Naive thymus-derived CD4-positive, alpha-beta T cell (primary cell): ENCODE measurements at regions of chr15 and their contacts with region 1.

Region 1: GRCh38 chr15:63504247-63504978 is at the start of gene USP3:
- DNase-seq: peak; percentile 88 to 95 (median 94)
- ATAC-seq: peak; percentile 86
- H3K4me3 ChIP-seq: peak within 1 kb of the TSS; percentile 95
- H3K4me3 Mint-ChIP-seq: peak within 1 kb of the TSS; percentile 93 to 99 (median 98)
- H3K27ac ChIP-seq: peak within 1 kb of the TSS; percentile 97
- H3K27ac Mint-ChIP-seq: peak within 1 kb of the TSS; percentile 94 to 99 (median 97)
- H3K4me1 ChIP-seq: peaks cover 65 to 70% of the 10 kb centered on the region in 2 donors
- H3K4me1 Mint-ChIP-seq: peaks cover 30 to 75% (median 72%) of the 10 kb centered on the region in 7 donors
- H3K27me3 ChIP-seq: no peaks in the 10 kb centered on the region
- H3K27me3 Mint-ChIP-seq: no peaks in the 10 kb centered on the region
- total RNA-seq, gene USP3: 64.2 to 288 (median 155) TPM

Region 2: GRCh38 chr15:63048115-63048775 is 456.2 kb before region 1 on chr15:
- CTCF ChIA-PET with region 1: no interaction called
- POLR2A ChIA-PET with region 1: no interaction called
- intact Hi-C with region 1: loop called in 1 of 2 experiments (anchors 5 kb)
- DNase-seq: peak; percentile 72 to 90 (median 85)
- ATAC-seq: peak; percentile 92
- H3K4me3 ChIP-seq: peak overlapping the region; percentile 76
- H3K4me3 Mint-ChIP-seq: peak overlapping the region; percentile 84 to 97 (median 94)
- H3K27ac ChIP-seq: peak overlapping the region; percentile 59
- H3K27ac Mint-ChIP-seq: peak overlapping the region; percentile 25 to 85 (median 68)
- H3K4me1 ChIP-seq: peaks cover 7 to 16% of the 10 kb centered on the region in 2 donors
- H3K4me1 Mint-ChIP-seq: peaks cover 13 to 42% (median 26%) of the 10 kb centered on the region in 7 donors
- H3K27me3 ChIP-seq: peaks cover 17 to 27% of the 10 kb centered on the region in 2 donors
- H3K27me3 Mint-ChIP-seq: peaks cover 30 to 60% (median 36%) of the 10 kb centered on the region in 5 donors

Region 3: DNA sequence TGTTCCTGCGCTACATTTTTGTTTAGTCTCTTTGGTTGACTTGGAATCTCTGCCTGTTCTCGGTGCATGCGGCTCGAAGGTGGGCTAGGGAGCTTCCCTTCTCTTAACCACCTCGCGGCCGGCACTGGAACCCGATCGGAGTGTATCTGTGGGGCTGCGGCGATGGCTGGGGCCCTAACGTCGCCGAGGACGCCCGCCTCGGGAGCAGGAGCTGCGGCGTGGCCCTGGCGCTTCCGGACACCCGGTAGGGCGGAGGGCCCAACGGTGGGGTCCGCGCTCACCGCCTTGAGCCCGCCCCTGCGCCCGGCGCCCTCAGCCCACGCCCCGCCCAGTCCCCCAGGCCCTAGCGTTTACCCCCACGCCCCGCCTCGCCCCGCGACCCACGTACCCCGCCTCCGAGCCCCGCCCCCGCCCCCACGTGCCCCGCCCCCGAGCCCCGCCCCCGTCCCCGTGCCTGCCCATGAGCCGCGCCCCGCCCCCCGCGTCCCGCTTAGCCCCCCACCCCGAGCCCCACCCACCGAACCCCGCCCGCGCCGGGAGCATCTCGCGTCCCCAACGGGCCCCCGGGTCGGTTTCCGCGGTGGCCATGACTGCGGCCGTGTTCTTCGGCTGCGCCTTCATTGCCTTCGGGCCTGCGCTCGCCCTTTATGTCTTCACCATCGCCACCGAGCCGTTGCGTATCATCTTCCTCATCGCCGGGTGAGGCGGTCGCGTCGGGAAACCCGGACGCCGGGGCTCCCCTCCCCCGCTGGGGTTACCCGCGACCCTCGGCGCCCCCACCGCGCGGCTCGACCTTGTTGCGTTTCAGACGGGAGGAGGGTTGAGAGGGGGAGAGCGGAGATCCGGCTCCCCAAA is 227.1 kb before region 1 on chr15 and contains the start of gene APH1B:
- CTCF ChIA-PET with region 1: no interaction called
- POLR2A ChIA-PET with region 1: no interaction called
- intact Hi-C with region 1: loop called in 1 of 2 experiments (anchors 2 kb)
- DNase-seq: peak; percentile 62 to 80 (median 74)
- ATAC-seq: peak; percentile 92
- H3K4me3 ChIP-seq: peak within 1 kb of the TSS; percentile 71
- H3K4me3 Mint-ChIP-seq: peak within 1 kb of the TSS; percentile 78 to 93 (median 89)
- H3K27ac ChIP-seq: peak within 1 kb of the TSS; percentile 96
- H3K27ac Mint-ChIP-seq: peak within 1 kb of the TSS; percentile 75 to 98 (median 86)
- H3K4me1 ChIP-seq: peaks cover 10 to 21% of the 10 kb centered on the region in 2 donors
- H3K4me1 Mint-ChIP-seq: peaks cover 23 to 49% (median 46%) of the 10 kb centered on the region in 7 donors
- H3K27me3 ChIP-seq: no peaks in the 10 kb centered on the region
- H3K27me3 Mint-ChIP-seq: no peaks in the 10 kb centered on the region
- total RNA-seq, gene APH1B: 9.9 to 29.9 (median 17.6) TPM

Region 4: DNA sequence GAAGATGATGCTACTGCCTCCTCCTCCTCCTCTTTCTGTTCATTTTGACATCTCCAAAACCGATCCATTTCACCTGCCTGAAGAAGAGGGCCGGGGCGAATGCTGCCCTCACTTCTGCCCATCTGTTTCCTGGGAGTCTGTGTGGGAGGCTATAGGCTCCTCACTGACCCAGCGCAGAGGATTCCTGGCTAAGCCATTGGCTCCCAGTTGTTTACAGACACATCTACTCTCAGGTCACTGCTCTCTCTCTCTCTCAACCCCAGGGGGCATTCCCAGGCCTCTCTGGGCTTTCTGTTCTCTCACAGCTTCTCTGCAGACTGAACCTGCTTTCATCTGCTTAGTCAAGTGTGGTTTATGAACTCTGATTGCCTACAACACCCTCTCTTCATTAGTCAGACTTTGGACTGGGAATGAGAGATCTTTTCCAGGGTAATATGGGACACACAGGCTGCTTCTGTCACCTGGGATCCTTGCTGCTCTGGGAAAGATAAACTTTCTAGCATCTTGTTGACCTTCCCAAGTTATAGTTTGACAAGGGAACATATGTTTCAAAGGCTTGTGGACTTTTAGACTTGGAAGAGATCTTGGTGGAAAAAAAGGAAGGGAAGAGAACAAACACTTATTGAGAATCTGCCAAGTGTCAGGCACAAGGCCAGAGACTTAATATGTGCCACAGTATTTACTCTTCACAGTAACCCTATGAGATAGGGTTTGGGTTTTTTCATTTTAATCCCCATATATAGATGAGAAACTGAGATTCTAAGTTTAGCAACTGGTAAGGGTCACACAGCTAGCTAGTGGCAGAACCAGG is 30.2 kb before region 1 on chr15:
- CTCF ChIA-PET with region 1: interaction called, 70 read pairs
- POLR2A ChIA-PET with region 1: interaction called, 392 read pairs
- intact Hi-C with region 1: loop called (anchors 1 kb)
- DNase-seq: peak in 5 of 9 donors; percentile 36 to 76 (median 51)
- ATAC-seq: peak; percentile 86
- H3K4me3 ChIP-seq: no peak overlapping the region
- H3K4me3 Mint-ChIP-seq: peak overlapping the region in 8 of 10 donors; percentile 44 to 75 (median 65)
- H3K27ac ChIP-seq: peak overlapping the region; percentile 50
- H3K27ac Mint-ChIP-seq: peak overlapping the region; percentile 86 to 98 (median 94)
- H3K4me1 ChIP-seq: peaks cover 11 to 44% of the 10 kb centered on the region in 2 donors
- H3K4me1 Mint-ChIP-seq: peaks cover 32 to 70% (median 61%) of the 10 kb centered on the region in 7 donors
- H3K27me3 ChIP-seq: no peaks in the 10 kb centered on the region
- H3K27me3 Mint-ChIP-seq: no peaks in the 10 kb centered on the region

Region 5: GRCh38 chr15:63514531-63514943 is 10.1 kb after region 1 on chr15:
- CTCF ChIA-PET with region 1: interaction called, 9 read pairs
- POLR2A ChIA-PET with region 1: interaction called, 28 read pairs
- intact Hi-C with region 1: loop called in 1 of 2 experiments (anchors 1 kb)
- DNase-seq: no peak
- ATAC-seq: peak; percentile 40
- H3K4me3 ChIP-seq: no peak overlapping the region
- H3K4me3 Mint-ChIP-seq: peak overlapping the region in 9 of 10 donors; percentile 9 to 80 (median 65)
- H3K27ac ChIP-seq: no peak overlapping the region
- H3K27ac Mint-ChIP-seq: peak overlapping the region in 7 of 9 donors; percentile 26 to 88 (median 79)
- H3K4me1 ChIP-seq: peaks cover 57 to 84% of the 10 kb centered on the region in 2 donors
- H3K4me1 Mint-ChIP-seq: peaks cover 58 to 99% (median 97%) of the 10 kb centered on the region in 7 donors
- H3K27me3 ChIP-seq: no peaks in the 10 kb centered on the region
- H3K27me3 Mint-ChIP-seq: no peaks in the 10 kb centered on the region

Region 6: DNA sequence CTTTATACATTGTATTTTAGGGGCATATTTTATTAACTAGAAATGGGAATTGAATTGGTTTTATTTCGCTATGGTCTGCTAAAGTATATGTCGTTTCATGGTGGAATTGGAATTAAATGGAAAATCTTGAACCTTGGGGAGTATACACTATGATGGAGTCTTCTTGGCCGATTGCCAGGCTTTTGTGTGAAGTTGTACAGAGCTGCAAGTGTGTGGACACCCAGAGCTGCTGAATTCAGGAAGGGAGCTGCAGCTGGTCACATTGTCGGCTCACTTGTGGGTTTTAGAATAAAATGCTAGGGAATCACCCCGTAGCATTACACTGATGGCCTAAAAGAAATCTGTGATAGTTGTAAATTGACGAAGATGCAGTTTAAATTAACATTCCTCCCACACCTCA is 35.1 kb after region 1 on chr15:
- CTCF ChIA-PET with region 1: interaction called, 8 read pairs
- POLR2A ChIA-PET with region 1: interaction called, 5 read pairs
- intact Hi-C with region 1: loop called in 1 of 2 experiments (anchors 5 kb)
- DNase-seq: no peak
- ATAC-seq: no peak
- H3K4me3 ChIP-seq: no peak overlapping the region
- H3K4me3 Mint-ChIP-seq: no peak overlapping the region
- H3K27ac ChIP-seq: no peak overlapping the region
- H3K27ac Mint-ChIP-seq: peak overlapping the region in 4 of 9 donors; percentile 5 to 69 (median 13)
- H3K4me1 ChIP-seq: peaks cover 5 to 7% of the 10 kb centered on the region in 2 donors
- H3K4me1 Mint-ChIP-seq: peaks cover 30 to 80% (median 73%) of the 10 kb centered on the region in 7 donors
- H3K27me3 ChIP-seq: no peaks in the 10 kb centered on the region
- H3K27me3 Mint-ChIP-seq: no peaks in the 10 kb centered on the region

Region 7: GRCh38 chr15:63752075-63752684 is 247.8 kb after region 1 on chr15:
- CTCF ChIA-PET with region 1: no interaction called
- POLR2A ChIA-PET with region 1: no interaction called
- intact Hi-C with region 1: no loop called
- DNase-seq: peak in 7 of 9 donors; percentile 39 to 70 (median 59)
- ATAC-seq: peak; percentile 93
- H3K4me3 ChIP-seq: no peak overlapping the region
- H3K4me3 Mint-ChIP-seq: no peak overlapping the region
- H3K27ac ChIP-seq: no peak overlapping the region
- H3K27ac Mint-ChIP-seq: peak overlapping the region in 7 of 9 donors; percentile 5 to 83 (median 63)
- H3K4me1 ChIP-seq: no peaks in the 10 kb centered on the region
- H3K4me1 Mint-ChIP-seq: peaks cover 0 to 9% (median 2%) of the 10 kb centered on the region in 7 donors
- H3K27me3 ChIP-seq: no peaks in the 10 kb centered on the region
- H3K27me3 Mint-ChIP-seq: no peaks in the 10 kb centered on the region

Region 8: DNA sequence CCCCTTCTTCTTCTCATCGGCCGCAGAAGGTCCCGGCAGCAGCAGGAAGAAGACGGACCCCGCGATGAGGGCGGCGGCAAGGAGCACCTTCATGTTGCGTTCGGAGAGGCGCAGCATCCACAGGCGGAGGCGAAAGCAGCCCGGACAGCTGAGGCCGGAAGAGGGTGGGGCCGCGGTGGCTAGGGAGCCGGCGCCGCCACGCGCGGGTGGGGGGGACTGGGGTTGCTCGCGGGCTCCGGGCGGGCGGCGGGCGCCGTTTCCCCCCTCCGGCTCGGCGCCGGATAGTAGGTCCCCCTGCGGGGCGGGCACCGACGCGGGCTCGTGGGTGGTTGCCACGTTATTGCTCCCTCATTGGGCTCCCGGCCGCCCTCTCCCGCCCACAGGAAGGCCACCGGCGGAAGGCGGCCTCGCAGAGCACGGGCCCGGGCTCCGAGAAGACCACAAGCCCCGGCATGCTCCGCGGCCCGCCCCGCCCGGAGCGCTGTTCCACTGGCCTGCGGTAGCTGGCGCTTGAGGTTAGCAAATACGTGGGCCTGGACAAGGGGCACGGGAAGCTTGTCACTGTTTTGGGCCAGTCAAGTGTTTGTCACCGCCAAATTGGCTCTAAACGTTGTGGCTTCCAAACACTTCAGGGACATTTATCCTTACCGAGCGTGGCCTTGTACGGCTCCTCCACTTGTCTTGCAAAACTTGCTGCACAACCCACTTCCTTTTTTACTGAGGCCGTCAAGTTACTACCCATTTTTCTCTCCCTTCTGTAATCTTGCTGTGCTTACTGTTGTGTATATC is 658.7 kb after region 1 on chr15 and contains the start of gene PPIB:
- CTCF ChIA-PET with region 1: no interaction called
- POLR2A ChIA-PET with region 1: no interaction called
- intact Hi-C with region 1: loop called (anchors 1 to 2 kb)
- DNase-seq: peak; percentile 89 to 98 (median 96)
- ATAC-seq: peak; percentile 97
- H3K4me3 ChIP-seq: peak within 1 kb of the TSS; percentile 76
- H3K4me3 Mint-ChIP-seq: peak within 1 kb of the TSS; percentile 80 to 97 (median 90)
- H3K27ac ChIP-seq: peak within 1 kb of the TSS; percentile 97
- H3K27ac Mint-ChIP-seq: peak within 1 kb of the TSS; percentile 83 to 97 (median 93)
- H3K4me1 ChIP-seq: peaks cover 17 to 29% of the 10 kb centered on the region in 2 donors
- H3K4me1 Mint-ChIP-seq: peaks cover 30 to 51% (median 46%) of the 10 kb centered on the region in 7 donors
- H3K27me3 ChIP-seq: no peaks in the 10 kb centered on the region
- H3K27me3 Mint-ChIP-seq: peaks cover 0 to 2% (median 0%) of the 10 kb centered on the region in 5 donors
- total RNA-seq, gene PPIB: 160 to 530 (median 184) TPM

Region 9: DNA sequence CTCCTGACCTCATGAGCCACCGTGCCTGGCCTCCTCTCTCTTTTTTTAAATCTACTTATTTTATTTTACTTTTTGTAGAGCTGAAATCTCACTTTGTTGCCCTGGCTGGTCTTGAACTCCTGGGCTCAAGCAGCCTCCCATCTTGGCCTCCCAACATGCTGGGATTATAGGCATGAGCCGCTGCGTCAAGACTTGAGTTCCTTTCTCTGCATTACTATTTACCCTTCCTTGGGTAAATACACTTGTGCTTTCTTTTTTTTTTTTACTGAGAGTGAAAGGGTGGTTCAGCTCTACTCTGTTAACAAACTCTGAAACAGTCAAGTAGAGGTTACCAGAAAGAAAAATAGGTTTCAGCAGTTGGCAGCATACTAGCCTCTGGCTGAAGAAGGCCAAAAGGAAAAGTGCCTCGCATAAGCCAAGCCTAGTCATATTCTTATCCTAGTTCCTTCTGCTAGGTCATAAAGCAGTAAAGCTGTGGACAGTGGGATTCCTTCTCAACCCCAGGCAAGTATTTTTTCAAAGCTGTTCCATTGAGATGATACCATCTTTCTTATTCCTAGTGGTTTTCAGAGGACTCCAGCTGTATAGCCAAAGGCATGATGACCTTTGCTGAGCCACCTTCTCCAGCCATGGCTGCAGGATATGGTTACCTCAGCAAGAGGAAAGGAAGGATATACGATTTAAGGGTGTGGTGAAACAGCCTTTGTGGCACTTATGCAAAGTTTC is 1135.9 kb after region 1 on chr15:
- CTCF ChIA-PET with region 1: no interaction called
- POLR2A ChIA-PET with region 1: no interaction called
- intact Hi-C with region 1: no loop called
- DNase-seq: no peak
- ATAC-seq: peak; percentile 34
- H3K4me3 ChIP-seq: no peak overlapping the region
- H3K4me3 Mint-ChIP-seq: peak overlapping the region in 9 of 10 donors; percentile 13 to 63 (median 38)
- H3K27ac ChIP-seq: no peak overlapping the region
- H3K27ac Mint-ChIP-seq: peak overlapping the region; percentile 4 to 78 (median 62)
- H3K4me1 ChIP-seq: peaks cover 35 to 36% of the 10 kb centered on the region in 2 donors
- H3K4me1 Mint-ChIP-seq: peaks cover 37 to 86% (median 63%) of the 10 kb centered on the region in 7 donors
- H3K27me3 ChIP-seq: no peaks in the 10 kb centered on the region
- H3K27me3 Mint-ChIP-seq: no peaks in the 10 kb centered on the region